ENCODE measurements at regions of chr13 and their contacts with region 1.

Region 1: DNA sequence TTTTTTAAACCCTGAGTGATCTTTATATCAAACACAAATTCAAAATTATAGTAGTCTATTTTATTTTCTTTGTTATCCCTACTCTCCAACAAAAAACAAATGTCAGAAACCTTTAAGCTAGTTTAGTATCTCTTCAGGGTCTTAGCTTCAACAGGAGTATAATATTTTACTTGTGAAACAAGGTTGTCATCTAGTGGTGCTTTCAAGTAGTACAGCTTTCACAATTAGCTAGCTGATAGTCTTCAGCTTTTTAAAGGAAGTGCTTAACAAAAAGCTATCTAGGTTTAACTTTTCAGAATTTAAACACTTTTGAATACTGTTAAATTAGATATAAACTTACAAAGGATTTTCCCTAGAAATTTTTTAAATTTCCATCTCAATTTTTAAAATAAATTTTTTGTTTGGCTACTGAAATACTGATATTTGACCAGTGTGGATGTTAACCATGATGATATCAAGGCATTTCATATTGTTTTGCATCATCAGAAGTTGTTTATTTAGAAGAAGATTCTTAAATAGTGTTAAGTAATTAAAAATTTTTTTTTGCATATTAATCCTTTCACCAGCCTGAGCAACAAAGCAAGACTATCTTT is 34.2 kb downstream of the TDRD3 start:
- DNase-seq: peak in 2 of 35 experiments; percentile 10 to 76
- ATAC-seq: peak; percentile 77 to 82 (median 81)
- H3K4me3 ChIP-seq: no peak overlapping the region
- H3K4me3 Mint-ChIP-seq: no peak overlapping the region
- H3K27ac ChIP-seq: no peak overlapping the region
- H3K27ac Mint-ChIP-seq: no peak overlapping the region
- H3K4me1 ChIP-seq: no peaks in the 10 kb centered on the region
- H3K4me1 Mint-ChIP-seq: peaks cover 32 to 38% (median 36%) of the 10 kb centered on the region in 3 donors
- H3K27me3 ChIP-seq: no peaks in the 10 kb centered on the region
- H3K27me3 Mint-ChIP-seq: no peaks in the 10 kb centered on the region

Region 2: GRCh38 chr13:59391696-59392095 is 1039.5 kb before region 1 on chr13:
- CTCF ChIA-PET with region 1: interaction called, 6 to 11 read pairs
- POLR2A ChIA-PET with region 1: no interaction called
- DNase-seq: peak in 34 of 35 experiments; percentile 3 to 83 (median 50)
- ATAC-seq: peak; percentile 87 to 96 (median 94)
- H3K4me3 ChIP-seq: no peak overlapping the region
- H3K4me3 Mint-ChIP-seq: no peak overlapping the region
- H3K27ac ChIP-seq: peak overlapping the region; percentile 39
- H3K27ac Mint-ChIP-seq: no peak overlapping the region
- H3K4me1 ChIP-seq: peaks cover 4 to 6% of the 10 kb centered on the region in 2 experiments
- H3K4me1 Mint-ChIP-seq: no peaks in the 10 kb centered on the region
- H3K27me3 ChIP-seq: peaks cover 0 to 4% of the 10 kb centered on the region in 2 experiments
- H3K27me3 Mint-ChIP-seq: peaks cover 5 to 11% of the 10 kb centered on the region in 2 donors

Region 3: DNA sequence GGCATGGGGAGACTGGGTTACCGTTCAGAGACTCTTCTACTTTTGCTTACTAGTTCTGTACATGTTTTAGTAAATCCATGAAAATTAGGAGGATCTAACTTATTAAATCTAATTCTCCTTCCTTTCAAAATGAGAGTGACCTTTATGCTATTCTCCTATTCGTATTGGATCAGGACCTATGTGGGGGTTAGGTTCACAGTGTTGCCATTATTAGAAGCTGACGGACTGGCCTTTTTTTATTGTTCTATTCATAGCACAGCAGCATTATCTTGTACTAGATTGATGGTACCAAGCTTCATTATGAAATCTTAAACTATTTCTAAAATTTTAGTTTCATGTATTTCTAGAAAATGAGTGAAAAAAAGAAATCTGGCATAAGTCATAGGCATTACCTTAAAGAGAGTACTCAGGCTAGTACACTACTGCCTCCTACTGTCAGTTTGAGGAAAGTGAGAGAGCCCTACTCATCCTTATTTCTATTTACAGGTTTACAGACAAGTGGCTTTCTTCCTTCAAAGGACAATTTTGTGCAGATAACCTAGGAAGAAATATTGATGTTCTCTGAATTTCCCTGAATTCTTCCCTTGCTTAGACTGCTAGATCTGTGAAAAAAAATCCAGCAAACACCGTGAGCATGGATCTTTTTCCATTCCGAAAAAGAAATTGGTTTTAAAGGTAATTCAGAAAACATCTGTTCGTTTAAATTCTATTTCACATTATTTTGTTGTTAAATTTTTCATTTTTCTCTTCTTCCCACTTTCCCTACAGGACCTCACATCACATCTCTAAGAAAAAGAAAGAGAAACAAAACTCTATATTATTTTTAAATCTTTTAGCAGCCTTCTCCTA is 753.0 kb before region 1 on chr13:
- CTCF ChIA-PET with region 1: interaction called, 6 to 43 read pairs
- POLR2A ChIA-PET with region 1: interaction called in 1 of 2 experiments, 3 read pairs
- DNase-seq: peak in 2 of 35 experiments; percentile 6 to 56
- ATAC-seq: peak in 2 of 4 experiments; percentile 55 to 65
- H3K4me3 ChIP-seq: no peak overlapping the region
- H3K4me3 Mint-ChIP-seq: no peak overlapping the region
- H3K27ac ChIP-seq: no peak overlapping the region
- H3K27ac Mint-ChIP-seq: no peak overlapping the region
- H3K4me1 ChIP-seq: no peaks in the 10 kb centered on the region
- H3K4me1 Mint-ChIP-seq: peaks cover 0 to 6% (median 3%) of the 10 kb centered on the region in 3 donors
- H3K27me3 ChIP-seq: no peaks in the 10 kb centered on the region
- H3K27me3 Mint-ChIP-seq: no peaks in the 10 kb centered on the region

Region 4: DNA sequence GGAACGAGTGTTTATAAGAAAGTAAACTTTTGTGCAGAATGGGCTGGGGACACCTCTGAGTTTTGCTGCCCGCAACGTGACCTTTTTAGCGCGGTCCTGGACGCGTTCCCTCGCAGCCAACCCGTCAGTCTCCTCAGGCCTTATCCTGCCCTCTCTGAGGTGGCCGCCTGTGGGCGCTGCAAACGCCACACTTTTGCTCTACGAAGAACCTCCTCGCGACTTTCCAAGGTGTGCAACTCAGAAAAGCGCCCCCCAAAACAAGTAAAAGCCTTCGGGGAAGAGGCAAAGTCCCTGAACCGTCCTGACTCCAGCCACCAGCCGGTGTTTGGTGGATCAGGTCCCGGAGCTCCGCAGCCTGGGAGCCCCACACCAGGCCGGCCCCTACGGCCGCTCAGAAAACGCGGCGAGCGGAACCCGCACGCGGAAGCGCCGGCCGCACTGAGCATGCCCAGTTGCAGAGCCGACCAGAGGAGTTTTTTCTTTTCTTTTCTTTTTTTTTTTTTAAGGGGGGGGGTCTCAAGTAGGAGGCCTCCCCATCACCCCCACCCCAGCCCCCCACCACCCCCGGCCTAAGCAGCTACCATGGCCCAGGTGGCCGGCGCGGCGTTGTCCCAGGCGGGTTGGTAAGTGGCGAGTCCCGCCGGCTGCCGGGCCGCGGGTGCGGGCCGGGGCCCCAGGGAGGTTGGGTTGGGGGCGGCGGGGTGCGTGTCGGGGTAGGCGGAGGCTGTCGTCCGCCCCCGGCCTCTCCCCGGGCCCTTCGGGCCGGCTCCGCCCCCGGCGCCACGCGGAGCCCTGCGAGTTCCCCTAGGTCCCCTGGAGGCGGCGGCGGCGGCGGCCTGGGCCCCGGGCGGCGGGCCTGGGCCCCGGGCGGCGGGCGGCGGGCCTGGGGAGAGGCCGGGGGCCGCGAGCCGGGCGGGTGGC is 34.2 kb before region 1 on chr13 and contains the start of gene TDRD3:
- CTCF ChIA-PET with region 1: interaction called in 1 of 2 experiments, 10 read pairs
- POLR2A ChIA-PET with region 1: no interaction called
- DNase-seq: peak; percentile 56 to 87 (median 70)
- ATAC-seq: peak; percentile 73 to 77 (median 74)
- H3K4me3 ChIP-seq: peak within 1 kb of the TSS; percentile 79 to 90
- H3K4me3 Mint-ChIP-seq: peak within 1 kb of the TSS; percentile 88 to 95 (median 94)
- H3K27ac ChIP-seq: peak within 1 kb of the TSS; percentile 88
- H3K27ac Mint-ChIP-seq: peak within 1 kb of the TSS; percentile 96
- H3K4me1 ChIP-seq: peaks cover 11 to 21% of the 10 kb centered on the region in 2 experiments
- H3K4me1 Mint-ChIP-seq: peaks cover 41 to 45% (median 43%) of the 10 kb centered on the region in 3 donors
- H3K27me3 ChIP-seq: no peaks in the 10 kb centered on the region
- H3K27me3 Mint-ChIP-seq: no peaks in the 10 kb centered on the region
- total RNA-seq, gene TDRD3: 23.6 to 30.4 (median 26.8) TPM

Measured in T-cell (primary cell).